MCF 10A (cell line): ENCODE measurements at regions of chr18 and their contacts with region 1.

Region 1: DNA sequence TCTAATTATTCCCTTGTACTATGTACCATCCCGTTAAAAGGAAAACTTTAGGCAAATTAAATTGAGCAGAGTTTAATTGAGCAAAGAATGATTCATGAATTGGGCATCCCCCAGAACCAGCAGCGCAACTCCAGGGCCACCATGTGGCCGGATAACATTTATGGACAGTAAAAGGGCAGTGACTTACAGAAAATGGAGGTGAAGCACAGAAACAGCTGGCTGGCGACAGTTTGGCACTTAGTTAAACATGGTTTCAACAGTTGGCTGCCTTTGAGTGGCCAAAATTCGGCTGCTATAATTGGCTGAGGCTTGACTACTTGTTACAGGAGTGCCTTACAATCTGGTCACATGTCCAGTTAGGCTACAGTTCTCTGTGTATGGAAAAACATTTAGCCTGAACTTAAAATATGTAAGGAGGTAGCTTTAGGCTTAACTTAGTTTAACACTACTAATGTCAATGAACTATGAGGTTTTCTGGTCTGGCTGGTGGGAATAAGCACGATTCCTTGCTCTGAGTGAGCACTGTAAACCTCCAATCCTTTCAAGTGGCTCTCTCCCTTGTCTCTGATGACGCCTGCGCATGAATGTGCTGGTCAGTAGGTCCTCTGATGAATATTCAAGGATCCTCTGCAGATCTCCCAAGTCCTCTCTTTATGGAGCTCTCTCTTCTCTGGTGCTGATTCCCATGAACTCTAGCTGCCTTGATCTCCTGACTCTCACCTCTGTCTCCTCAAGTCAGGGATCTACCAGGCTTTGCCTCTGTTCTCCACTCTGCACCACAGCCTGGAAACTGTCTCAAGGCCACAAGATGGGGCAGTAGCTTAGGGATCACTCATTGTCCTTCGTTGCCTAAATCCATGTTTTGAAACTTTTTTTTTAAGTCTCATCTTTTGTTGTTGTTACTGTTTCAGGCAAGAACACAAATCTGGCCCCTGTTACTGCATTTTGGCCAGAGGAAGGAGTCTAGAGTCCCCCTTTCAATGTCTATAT is 24.4 kb upstream of the RAB31 start:
- DNase-seq: peak; percentile 84
- H3K4me3 Mint-ChIP-seq: no peak overlapping the region
- H3K27ac Mint-ChIP-seq: no peak overlapping the region
- H3K4me1 Mint-ChIP-seq: peaks cover 11% of the 10 kb centered on the region
- H3K27me3 Mint-ChIP-seq: no peaks in the 10 kb centered on the region
- CTCF ChIP-seq: peak; percentile 48

Region 2: DNA sequence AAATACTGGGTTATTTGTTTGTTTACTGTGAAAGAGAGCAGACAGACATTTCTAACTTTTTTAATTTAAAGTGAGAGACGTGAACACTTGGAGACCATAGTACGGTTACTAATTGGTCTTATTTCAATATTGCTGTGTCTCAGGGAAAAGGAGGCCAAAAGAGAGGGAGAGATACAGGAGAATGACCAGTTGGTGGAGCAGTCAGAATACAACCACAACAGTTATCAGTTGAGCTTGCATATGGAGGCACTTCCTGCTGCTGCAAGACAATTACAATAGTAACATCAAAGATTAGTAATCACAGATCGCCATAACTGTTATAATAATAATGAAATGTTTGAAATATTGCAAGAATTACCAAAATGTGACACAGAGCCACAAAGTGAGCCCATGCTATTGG is 291.0 kb before region 1 on chr18:
- CTCF ChIA-PET with region 1: no interaction called
- POLR2A ChIA-PET with region 1: no interaction called
- intact Hi-C with region 1: no loop called
- DNase-seq: no peak
- H3K4me3 Mint-ChIP-seq: no peak overlapping the region
- H3K27ac Mint-ChIP-seq: no peak overlapping the region
- H3K4me1 Mint-ChIP-seq: no peaks in the 10 kb centered on the region
- H3K27me3 Mint-ChIP-seq: no peaks in the 10 kb centered on the region
- CTCF ChIP-seq: no peak

Region 3: GRCh38 chr18:9673296-9674251 is 10.1 kb before region 1 on chr18:
- CTCF ChIA-PET with region 1: interaction called, 6 read pairs
- POLR2A ChIA-PET with region 1: interaction called, 11 read pairs
- intact Hi-C with region 1: no loop called
- DNase-seq: peak; percentile 93
- H3K4me3 Mint-ChIP-seq: peak overlapping the region; percentile 43
- H3K27ac Mint-ChIP-seq: peak overlapping the region; percentile 94
- H3K4me1 Mint-ChIP-seq: peaks cover 17% of the 10 kb centered on the region
- H3K27me3 Mint-ChIP-seq: no peaks in the 10 kb centered on the region
- CTCF ChIP-seq: peak; percentile 21

Region 4: DNA sequence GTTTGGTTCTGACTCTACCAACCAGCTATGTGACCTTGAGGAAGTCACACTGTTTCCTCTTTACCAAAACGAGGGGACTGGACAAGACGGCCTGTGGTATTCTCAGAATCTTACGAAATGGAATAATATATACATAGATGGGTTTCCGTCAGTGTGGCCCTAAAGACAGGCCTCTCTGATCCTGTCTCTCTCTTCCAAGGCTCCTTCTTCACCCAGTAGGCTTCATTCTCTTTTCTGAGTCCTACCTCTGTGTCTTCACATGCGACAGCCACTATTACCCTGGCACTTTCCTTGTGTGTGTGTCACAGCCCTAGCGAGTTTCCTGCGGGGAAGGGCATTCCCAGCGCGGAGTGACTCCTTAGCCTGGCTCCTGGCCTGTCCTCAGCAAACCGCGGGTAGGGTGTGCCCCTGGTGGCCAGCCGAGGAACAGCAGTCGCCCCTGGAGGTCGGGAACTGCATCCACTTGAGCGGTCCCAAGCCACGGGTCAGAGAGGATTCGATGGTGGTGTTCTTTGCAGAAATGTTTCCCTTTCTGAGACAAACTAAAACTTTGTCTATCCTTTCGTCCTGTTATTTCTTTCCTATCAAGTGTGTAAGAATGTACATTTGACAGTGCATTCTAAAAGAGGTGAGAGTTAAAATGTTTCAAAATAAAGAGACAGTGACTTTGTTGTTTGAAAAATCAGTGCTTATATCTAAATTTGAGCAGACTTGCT is 87.7 kb after region 1 on chr18:
- CTCF ChIA-PET with region 1: no interaction called
- POLR2A ChIA-PET with region 1: no interaction called
- intact Hi-C with region 1: loop called (anchors 1 kb)
- DNase-seq: peak; percentile 74
- H3K4me3 Mint-ChIP-seq: no peak overlapping the region
- H3K27ac Mint-ChIP-seq: no peak overlapping the region
- H3K4me1 Mint-ChIP-seq: peaks cover 6% of the 10 kb centered on the region
- H3K27me3 Mint-ChIP-seq: no peaks in the 10 kb centered on the region
- CTCF ChIP-seq: peak; percentile 96

Region 5: GRCh38 chr18:9817725-9818422 is 134.2 kb after region 1 on chr18:
- CTCF ChIA-PET with region 1: no interaction called
- POLR2A ChIA-PET with region 1: no interaction called
- intact Hi-C with region 1: no loop called
- DNase-seq: no peak
- H3K4me3 Mint-ChIP-seq: no peak overlapping the region
- H3K27ac Mint-ChIP-seq: no peak overlapping the region
- H3K4me1 Mint-ChIP-seq: peaks cover 8% of the 10 kb centered on the region
- H3K27me3 Mint-ChIP-seq: no peaks in the 10 kb centered on the region
- CTCF ChIP-seq: no peak

Region 6: DNA sequence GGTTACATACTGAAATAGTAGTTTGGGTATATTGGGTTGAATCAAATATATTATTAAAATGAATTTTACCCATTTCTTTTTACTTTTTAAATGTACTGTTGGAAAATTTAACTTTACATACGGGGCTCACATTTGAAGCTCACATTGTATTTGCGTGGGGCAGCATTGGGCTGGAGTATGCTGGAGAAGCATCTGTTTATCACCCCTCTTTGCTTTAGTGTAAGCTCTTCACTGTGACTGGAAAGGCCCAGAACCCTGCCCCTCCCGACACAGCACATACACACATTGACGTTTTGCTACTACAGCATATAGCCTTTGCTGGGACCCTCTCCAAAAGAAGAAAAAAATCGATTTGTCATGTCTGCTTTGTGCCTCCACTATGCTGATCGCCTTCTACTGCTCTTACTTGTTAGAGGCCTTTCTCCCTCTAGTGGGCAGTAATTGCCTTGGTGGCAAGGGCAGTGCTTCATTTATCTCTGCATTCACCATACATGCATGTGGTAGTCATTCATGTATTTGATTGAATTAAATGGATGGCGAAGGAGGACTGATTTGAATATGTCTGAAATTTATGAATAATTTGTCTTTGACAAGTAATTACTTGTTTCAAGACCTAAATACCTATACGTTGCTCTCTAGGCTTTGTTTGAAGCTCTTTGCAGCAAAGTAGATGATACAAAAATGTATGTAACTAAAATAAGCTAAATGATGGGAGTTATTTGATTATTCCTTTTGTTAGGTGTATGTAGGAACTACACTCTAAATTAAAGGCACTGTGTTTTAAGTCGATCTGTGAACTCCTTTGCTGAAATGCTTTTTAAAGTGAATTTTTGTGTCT is 267.5 kb after region 1 on chr18:
- CTCF ChIA-PET with region 1: interaction called, 16 read pairs
- POLR2A ChIA-PET with region 1: interaction called, 3 read pairs
- intact Hi-C with region 1: loop called (anchors 1 kb)
- DNase-seq: peak; percentile 70
- H3K4me3 Mint-ChIP-seq: no peak overlapping the region
- H3K27ac Mint-ChIP-seq: peak overlapping the region; percentile 64
- H3K4me1 Mint-ChIP-seq: peaks cover 33% of the 10 kb centered on the region
- H3K27me3 Mint-ChIP-seq: no peaks in the 10 kb centered on the region
- CTCF ChIP-seq: peak; percentile 67

Region 7: GRCh38 chr18:10525371-10526210 is 841.9 kb after region 1 on chr18 and contains the start of gene NAPG:
- CTCF ChIA-PET with region 1: no interaction called
- POLR2A ChIA-PET with region 1: no interaction called
- intact Hi-C with region 1: loop called (anchors 10 kb)
- DNase-seq: peak; percentile 89
- H3K4me3 Mint-ChIP-seq: peak within 1 kb of the TSS; percentile 91
- H3K27ac Mint-ChIP-seq: peak within 1 kb of the TSS; percentile 95
- H3K4me1 Mint-ChIP-seq: peaks cover 24% of the 10 kb centered on the region
- H3K27me3 Mint-ChIP-seq: no peaks in the 10 kb centered on the region
- CTCF ChIP-seq: no peak
- total RNA-seq, gene NAPG: 31.8 and 32.2 TPM in 2 replicates